Caco-2 (cell line): ENCODE measurements at regions of chr5 and their contacts with region 1.

Region 1: DNA sequence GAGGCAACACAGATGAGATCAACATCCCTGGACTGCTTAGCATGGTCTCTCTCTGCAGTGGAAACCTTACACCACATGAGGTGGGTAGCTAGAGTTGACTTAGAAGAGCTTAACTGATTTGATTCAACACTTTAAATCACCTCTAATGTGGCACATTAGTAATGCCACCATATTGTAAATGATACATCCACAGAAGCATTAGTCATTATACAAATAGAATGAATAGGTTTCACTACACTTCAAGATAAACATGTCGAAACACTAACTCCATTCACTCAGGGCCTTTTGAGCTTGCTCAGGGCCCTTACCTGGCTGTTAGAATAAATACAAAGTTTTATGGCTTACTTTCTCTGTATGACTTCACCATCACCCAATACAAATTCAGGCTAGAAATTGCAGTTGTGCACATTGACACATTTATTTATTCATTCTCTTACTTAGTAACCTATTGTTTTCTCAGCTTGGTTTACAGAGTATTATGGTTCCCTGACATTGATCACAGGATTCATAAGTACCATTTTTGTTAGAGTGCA is 9.3 kb upstream of the SMAD5 start:
- DNase-seq: peak; percentile 78 to 79
- H3K4me3 ChIP-seq: no peak overlapping the region
- H3K4me3 Mint-ChIP-seq: no peak overlapping the region
- H3K27ac Mint-ChIP-seq: peak overlapping the region; percentile 59
- H3K4me1 ChIP-seq: peaks cover 79% of the 10 kb centered on the region
- H3K4me1 Mint-ChIP-seq: peaks cover 53% of the 10 kb centered on the region
- H3K27me3 ChIP-seq: no peaks in the 10 kb centered on the region
- H3K27me3 Mint-ChIP-seq: no peaks in the 10 kb centered on the region
- CTCF ChIP-seq: no peak

Region 2: GRCh38 chr5:136034976-136035375 is 88.3 kb before region 1 on chr5:
- CTCF ChIA-PET with region 1: no interaction called
- POLR2A ChIA-PET with region 1: interaction called, 11 read pairs
- intact Hi-C with region 1: no loop called
- DNase-seq: no peak
- H3K4me3 ChIP-seq: no peak overlapping the region
- H3K4me3 Mint-ChIP-seq: no peak overlapping the region
- H3K27ac Mint-ChIP-seq: no peak overlapping the region
- H3K4me1 ChIP-seq: peaks cover 12% of the 10 kb centered on the region; the same call in 1 of the 2 replicates
- H3K4me1 Mint-ChIP-seq: peaks cover 7% of the 10 kb centered on the region
- H3K27me3 ChIP-seq: no peaks in the 10 kb centered on the region
- H3K27me3 Mint-ChIP-seq: no peaks in the 10 kb centered on the region
- CTCF ChIP-seq: no peak

Region 3: DNA sequence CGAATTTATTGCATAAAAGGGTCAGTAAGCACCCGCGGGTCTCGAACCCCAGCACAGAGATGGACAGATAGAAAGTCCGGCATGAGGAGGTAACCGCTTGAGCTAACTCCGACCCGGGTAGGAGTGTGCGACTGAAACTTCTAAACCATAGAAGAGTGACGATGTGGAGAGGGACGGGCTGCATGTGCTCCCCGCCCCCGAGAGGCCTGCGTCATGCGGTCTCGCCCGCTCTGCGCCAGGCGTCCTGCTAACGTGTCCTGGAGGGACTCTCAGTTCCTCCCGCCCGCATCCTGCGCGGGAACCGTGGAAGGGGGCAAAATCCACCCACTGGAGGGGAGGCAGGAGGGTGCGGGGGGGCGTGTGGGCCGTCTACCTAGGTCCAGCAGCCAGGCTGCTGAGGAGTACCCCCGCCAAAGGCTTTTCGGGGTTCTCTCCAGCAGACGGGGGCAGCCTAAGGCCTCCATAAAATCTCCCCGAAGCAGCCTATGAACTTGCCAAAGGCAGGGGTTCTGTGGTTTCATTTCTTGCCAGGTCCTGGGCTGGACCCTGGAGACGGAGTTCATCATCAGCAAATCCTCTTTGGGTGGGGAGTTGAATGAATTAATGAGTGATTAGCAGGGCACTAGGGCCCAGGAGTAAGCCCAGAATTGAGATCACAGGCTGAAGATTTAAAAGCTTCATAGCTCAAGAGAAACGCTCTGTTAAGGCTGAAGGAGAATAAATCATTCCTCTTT is 42.7 kb before region 1 on chr5:
- CTCF ChIA-PET with region 1: no interaction called
- POLR2A ChIA-PET with region 1: no interaction called
- intact Hi-C with region 1: no loop called
- DNase-seq: no peak
- H3K4me3 ChIP-seq: no peak overlapping the region
- H3K4me3 Mint-ChIP-seq: no peak overlapping the region
- H3K27ac Mint-ChIP-seq: no peak overlapping the region
- H3K4me1 ChIP-seq: peaks cover 11% of the 10 kb centered on the region
- H3K4me1 Mint-ChIP-seq: no peaks in the 10 kb centered on the region
- H3K27me3 ChIP-seq: no peaks in the 10 kb centered on the region
- H3K27me3 Mint-ChIP-seq: no peaks in the 10 kb centered on the region
- CTCF ChIP-seq: no peak

Region 4: DNA sequence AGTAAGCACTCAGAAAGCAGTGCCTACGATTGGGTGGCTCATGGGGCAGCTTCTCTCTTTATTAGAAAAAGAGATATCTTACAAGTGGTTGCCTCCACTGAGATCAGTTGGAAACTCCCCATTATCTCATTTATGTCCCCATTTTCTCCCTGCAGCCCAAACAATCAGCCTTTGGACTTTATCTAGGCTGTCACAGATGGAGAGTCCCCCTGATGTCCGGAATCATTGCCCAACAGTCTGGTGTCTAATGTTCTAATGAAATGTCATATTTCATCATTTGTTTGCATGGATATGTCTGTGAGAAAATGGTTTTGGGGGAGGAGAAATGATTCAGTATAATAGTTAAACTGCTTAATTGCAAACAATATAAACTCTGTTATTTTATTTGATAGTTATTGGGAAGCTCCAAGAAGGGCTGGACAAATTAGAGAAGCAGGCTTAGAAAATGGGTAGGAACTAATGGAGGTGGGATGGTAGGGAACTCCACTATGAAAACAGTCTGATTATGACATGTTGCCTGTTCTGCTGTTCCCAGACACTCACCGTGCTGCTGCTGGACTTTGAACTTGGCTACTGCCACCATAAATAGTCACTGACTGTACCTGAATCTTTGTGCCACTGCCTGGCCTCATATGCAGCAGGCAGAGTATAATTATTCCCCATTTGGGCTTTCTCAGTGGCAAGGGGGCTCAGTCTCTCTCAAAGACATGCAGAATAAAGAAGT is 29.0 kb before region 1 on chr5:
- CTCF ChIA-PET with region 1: no interaction called
- POLR2A ChIA-PET with region 1: interaction called, 16 read pairs
- intact Hi-C with region 1: loop called (anchors 1 kb)
- DNase-seq: peak; percentile 51 to 75
- H3K4me3 ChIP-seq: no peak overlapping the region
- H3K4me3 Mint-ChIP-seq: peak overlapping the region; percentile 9
- H3K27ac Mint-ChIP-seq: peak overlapping the region; percentile 69
- H3K4me1 ChIP-seq: peaks cover 65% of the 10 kb centered on the region
- H3K4me1 Mint-ChIP-seq: peaks cover 67% of the 10 kb centered on the region
- H3K27me3 ChIP-seq: no peaks in the 10 kb centered on the region
- H3K27me3 Mint-ChIP-seq: no peaks in the 10 kb centered on the region
- CTCF ChIP-seq: no peak

Region 5: GRCh38 chr5:136103118-136103517 is 20.2 kb before region 1 on chr5:
- CTCF ChIA-PET with region 1: interaction called, 4 read pairs
- POLR2A ChIA-PET with region 1: interaction called, 16 read pairs
- intact Hi-C with region 1: loop called (anchors 1 kb)
- DNase-seq: no peak
- H3K4me3 ChIP-seq: no peak overlapping the region
- H3K4me3 Mint-ChIP-seq: no peak overlapping the region
- H3K27ac Mint-ChIP-seq: peak overlapping the region; percentile 87
- H3K4me1 ChIP-seq: peaks cover 96% of the 10 kb centered on the region
- H3K4me1 Mint-ChIP-seq: peaks cover 54% of the 10 kb centered on the region
- H3K27me3 ChIP-seq: no peaks in the 10 kb centered on the region
- H3K27me3 Mint-ChIP-seq: no peaks in the 10 kb centered on the region
- CTCF ChIP-seq: no peak

Region 6: DNA sequence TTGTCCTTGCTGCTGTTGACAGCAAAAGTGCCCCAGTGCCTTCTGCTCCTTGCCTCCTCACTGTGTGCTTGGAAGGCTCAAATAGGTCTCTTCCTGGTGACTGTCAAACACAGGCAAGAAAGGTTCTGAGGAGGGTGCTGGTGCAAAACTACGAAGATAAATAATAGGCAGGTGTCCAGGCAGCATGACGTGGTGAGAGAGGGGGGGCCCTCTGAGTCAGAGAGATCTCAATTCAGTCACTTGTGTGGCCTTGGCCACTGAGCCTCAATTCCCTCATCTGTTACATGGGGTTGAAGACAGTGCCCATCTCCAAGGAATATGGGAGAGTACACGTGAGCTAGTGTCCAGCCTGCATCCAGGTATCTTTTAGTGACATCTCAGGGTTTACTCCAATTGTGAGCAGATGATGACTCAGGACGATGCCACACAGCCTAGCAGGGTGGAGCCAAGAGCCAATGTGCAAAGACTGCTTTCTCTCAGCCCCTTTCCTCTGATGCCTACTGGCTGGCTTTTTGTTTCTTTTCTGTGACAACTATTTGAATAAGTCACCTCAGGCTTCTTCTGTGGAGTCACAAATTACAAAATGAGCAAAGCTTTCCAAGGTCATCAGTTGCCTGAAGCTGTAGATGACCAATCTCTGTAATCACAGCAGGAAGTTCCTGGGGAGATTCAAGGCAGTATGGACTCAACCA is 99.4 kb after region 1 on chr5:
- CTCF ChIA-PET with region 1: no interaction called
- POLR2A ChIA-PET with region 1: no interaction called
- intact Hi-C with region 1: no loop called
- DNase-seq: no peak
- H3K4me3 ChIP-seq: no peak overlapping the region
- H3K4me3 Mint-ChIP-seq: no peak overlapping the region
- H3K27ac Mint-ChIP-seq: no peak overlapping the region
- H3K4me1 ChIP-seq: no peaks in the 10 kb centered on the region
- H3K4me1 Mint-ChIP-seq: no peaks in the 10 kb centered on the region
- H3K27me3 ChIP-seq: no peaks in the 10 kb centered on the region
- H3K27me3 Mint-ChIP-seq: peaks cover 9% of the 10 kb centered on the region
- CTCF ChIP-seq: no peak